Activated CD4-positive, alpha-beta memory T cell treated with anti-CD3 and anti-CD28 coated beads, Interleukin-2, amount 10 ng/mL, durations not matched to agents 7 days and 5 days (primary cell): ENCODE measurements at regions of chr12 and their contacts with region 1.

Region 1: DNA sequence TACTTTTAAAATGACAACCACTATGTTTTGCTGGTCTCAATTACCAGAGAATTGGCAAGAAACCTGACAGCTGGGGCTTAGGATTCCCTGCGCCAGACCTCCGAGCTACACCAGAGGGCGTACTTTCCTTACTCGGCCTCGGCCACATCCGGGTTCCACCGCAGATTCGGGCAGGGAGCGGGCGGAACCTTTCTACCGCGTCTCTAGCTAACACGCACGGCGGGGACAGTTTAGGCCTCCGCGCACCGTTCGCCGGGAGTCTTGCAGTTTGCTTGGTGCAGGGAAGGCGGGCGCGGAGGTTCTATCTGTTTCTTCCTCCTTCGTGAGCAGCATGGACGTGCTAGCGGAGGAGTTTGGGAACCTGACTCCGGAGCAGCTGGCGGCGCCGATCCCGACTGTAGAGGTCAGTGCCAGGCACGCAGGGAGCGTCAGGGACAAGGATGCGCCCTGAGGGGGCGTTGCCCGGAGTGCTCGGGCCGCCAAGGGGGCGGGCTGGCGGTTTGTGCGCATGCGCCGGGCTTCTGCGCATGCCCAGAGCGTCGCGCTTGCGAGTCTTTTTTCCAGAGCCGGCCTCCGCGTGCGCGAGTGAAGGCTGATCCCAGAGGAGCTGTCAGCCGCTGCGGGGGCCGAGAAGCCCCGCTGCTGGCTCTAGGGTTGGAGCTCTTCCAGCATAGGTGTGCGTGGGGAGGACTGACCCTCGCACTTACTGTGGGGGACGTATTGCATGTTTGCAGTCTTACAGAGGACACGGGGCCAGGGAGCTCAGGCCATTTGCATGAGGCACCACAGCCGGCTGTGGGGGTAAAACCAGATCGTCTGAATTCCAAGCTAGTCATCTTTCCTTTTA is at the start of gene POLR3B:
- DNase-seq: peak; percentile 97
- H3K4me3 Mint-ChIP-seq: peak within 1 kb of the TSS; percentile 87
- H3K27ac Mint-ChIP-seq: peak within 1 kb of the TSS; percentile 88
- H3K4me1 Mint-ChIP-seq: peaks cover 20% of the 10 kb centered on the region
- H3K27me3 Mint-ChIP-seq: no peaks in the 10 kb centered on the region
- total RNA-seq, gene POLR3B: 3.7 to 4.4 TPM

Region 2: DNA sequence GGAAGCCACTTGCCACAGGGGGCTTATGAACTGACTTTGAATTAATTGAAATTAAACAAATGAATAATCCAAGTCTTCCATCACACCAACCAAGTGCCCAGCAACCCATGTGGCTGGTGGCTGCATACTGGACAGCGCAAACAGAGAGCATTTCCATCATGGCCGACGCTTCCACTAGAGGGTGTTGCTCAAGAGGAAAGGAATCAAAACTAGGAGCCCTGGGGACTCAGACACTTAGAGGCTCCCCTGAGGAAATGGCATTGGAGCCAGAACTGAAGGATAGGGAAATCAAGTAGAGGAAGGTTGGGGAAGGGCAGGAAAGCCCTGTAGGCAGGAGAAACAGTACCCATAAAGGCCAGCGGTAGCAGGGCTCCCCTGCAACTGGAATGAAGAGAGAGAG is 168.4 kb before region 1 on chr12:
- CTCF ChIA-PET with region 1: no interaction called
- POLR2A ChIA-PET with region 1: no interaction called
- DNase-seq: no peak
- H3K4me3 Mint-ChIP-seq: no peak overlapping the region
- H3K27ac Mint-ChIP-seq: no peak overlapping the region
- H3K4me1 Mint-ChIP-seq: no peaks in the 10 kb centered on the region
- H3K27me3 Mint-ChIP-seq: peaks cover 15% of the 10 kb centered on the region

Region 3: DNA sequence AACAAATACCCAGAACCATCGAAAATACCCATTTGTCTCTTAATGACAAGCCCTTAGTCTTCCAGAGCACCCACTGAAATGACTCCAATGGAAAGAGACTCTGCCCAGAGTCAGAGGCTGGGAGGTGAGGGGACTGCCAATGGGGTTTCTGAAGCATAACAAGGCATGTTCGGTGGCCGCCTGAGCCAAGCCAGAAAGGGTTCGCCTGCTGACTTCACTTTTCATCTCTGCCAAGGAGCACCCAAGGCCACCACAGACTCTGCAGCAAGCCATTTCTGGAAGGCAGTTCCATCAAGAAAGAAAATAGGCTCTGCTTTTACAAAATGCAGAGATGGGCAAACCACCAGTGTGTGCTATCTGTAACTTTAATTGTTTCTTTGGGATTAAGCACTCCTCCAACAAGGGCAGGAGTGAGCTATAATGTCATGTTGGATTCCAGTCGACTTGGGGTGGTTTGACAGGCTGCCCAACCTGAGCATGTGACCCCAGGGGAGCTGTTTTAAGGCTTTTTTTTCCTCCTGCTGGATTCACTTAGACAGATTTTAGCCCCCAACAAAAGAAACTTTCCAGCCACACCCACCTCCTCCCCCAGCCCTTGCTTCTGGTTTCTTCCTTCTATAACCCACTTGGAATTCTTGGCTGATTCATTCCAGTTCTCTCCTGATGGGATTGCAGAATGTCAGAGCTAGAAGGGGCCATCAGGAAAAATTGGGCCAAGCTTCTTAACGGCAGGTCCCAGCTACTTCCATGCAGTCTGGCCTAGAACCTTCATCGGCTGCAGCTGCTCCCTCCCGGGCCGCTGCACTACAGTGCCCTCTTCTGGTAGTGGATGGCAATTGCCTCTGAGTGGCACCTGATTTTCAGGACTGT is 134.1 kb before region 1 on chr12:
- CTCF ChIA-PET with region 1: interaction called, 19 read pairs
- POLR2A ChIA-PET with region 1: interaction called, 3 read pairs
- DNase-seq: peak; percentile 76
- H3K4me3 Mint-ChIP-seq: no peak overlapping the region
- H3K27ac Mint-ChIP-seq: no peak overlapping the region
- H3K4me1 Mint-ChIP-seq: peaks cover 22% of the 10 kb centered on the region
- H3K27me3 Mint-ChIP-seq: peaks cover 3% of the 10 kb centered on the region

Region 4: DNA sequence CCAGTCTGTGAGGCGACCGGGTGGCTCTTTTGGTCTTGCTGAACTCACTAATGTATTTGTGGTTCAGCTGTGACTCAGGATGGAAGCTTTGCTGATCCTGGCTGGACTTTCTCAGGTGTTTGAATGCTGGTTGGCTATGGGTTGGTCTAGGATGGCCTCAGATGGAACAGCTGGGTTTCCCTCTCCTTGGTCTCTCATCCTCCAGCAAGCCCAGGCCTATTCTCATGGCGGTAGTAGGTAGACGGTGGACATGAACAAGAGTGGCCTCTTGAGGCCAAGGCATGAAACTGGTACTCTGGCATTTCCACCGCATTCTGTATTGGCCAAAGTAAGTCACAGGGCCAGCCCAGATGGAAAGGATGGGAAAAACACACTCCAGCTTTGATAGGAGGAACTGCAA is 12.0 kb before region 1 on chr12:
- CTCF ChIA-PET with region 1: interaction called, 10 read pairs
- POLR2A ChIA-PET with region 1: no interaction called
- DNase-seq: no peak
- H3K4me3 Mint-ChIP-seq: no peak overlapping the region
- H3K27ac Mint-ChIP-seq: no peak overlapping the region
- H3K4me1 Mint-ChIP-seq: no peaks in the 10 kb centered on the region
- H3K27me3 Mint-ChIP-seq: no peaks in the 10 kb centered on the region

Region 5: DNA sequence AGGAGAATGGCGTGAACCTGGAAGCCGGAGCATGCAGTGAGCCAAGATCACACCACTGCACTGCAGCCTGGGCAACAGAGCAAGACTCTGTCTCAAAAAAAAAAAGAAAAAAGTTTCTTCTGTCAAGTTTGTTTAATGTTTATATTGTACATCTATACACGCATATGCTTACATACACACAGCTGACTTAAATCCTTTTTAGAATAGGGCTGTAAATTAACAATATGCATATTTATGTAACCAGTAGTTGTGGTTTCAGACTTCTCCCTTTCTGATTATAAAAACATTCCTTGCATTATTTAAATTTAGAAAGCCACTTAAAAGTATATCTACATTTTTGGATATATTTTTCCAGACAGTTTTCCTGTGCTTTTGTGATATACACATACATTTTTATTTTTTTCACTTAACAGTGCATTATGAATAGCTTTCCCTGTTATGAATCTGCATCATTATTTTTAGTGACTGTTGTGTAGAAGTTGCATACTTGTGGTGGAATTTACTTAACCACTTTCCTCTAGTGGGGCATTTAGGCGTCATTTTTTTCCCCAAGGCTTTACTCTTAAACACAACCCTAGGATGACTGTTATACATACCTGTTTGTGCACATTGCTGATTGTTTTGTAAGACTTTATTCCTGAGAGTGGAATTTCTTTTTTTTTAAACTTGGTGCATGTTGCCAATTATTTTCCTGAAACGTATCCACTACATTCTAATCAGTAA is 29.2 kb after region 1 on chr12:
- CTCF ChIA-PET with region 1: interaction called, 16 read pairs
- POLR2A ChIA-PET with region 1: interaction called, 6 read pairs
- DNase-seq: no peak
- H3K4me3 Mint-ChIP-seq: no peak overlapping the region
- H3K27ac Mint-ChIP-seq: no peak overlapping the region
- H3K4me1 Mint-ChIP-seq: peaks cover 5% of the 10 kb centered on the region
- H3K27me3 Mint-ChIP-seq: no peaks in the 10 kb centered on the region

Region 6: DNA sequence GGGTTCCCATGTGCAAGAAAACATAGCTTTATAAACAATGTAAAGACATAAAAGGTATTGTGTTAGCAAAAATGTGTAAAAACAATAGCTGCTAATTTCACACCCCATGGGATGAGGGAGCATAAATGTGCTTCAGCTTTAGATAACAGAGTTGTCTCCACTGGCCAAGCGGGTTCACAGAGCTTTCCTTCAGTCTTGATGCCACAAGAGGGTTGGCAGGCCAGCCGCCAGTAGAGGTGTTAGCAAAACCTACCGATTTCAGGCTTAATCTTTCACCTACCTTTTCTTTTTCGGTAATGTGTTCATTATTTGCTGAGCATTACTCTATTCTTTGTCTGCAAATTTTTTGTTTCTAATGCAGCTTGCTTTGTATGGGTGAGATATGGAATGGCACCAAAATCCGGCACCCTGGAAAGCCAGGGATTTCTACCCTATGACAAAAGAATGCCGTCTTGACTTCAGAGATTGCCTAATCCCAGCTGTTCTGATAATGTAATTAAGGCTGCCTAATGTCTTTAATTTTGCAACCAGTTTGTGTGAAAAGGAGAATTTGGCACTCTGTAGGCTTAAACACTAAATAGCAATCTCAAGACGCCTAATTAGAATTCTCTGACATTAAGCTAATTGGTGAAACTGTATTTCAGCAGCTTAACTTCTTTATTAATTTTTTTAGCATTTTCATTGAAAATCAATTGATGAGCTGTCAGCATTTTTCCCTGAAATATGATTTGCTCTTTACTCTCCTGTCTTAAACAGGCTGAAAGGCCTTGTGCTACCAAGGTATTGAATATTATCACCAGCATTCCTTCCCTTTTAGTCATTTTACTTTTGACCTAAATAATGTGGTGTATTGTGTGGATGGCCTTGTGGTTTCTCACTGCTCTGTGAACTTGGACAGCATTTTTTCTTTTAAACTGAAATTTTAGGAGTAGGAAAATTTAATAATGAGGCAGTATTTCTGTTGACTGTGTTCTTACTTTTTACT is 60.4 kb after region 1 on chr12:
- CTCF ChIA-PET with region 1: no interaction called
- POLR2A ChIA-PET with region 1: no interaction called
- DNase-seq: no peak
- H3K4me3 Mint-ChIP-seq: no peak overlapping the region
- H3K27ac Mint-ChIP-seq: no peak overlapping the region
- H3K4me1 Mint-ChIP-seq: no peaks in the 10 kb centered on the region
- H3K27me3 Mint-ChIP-seq: no peaks in the 10 kb centered on the region

Region 7: DNA sequence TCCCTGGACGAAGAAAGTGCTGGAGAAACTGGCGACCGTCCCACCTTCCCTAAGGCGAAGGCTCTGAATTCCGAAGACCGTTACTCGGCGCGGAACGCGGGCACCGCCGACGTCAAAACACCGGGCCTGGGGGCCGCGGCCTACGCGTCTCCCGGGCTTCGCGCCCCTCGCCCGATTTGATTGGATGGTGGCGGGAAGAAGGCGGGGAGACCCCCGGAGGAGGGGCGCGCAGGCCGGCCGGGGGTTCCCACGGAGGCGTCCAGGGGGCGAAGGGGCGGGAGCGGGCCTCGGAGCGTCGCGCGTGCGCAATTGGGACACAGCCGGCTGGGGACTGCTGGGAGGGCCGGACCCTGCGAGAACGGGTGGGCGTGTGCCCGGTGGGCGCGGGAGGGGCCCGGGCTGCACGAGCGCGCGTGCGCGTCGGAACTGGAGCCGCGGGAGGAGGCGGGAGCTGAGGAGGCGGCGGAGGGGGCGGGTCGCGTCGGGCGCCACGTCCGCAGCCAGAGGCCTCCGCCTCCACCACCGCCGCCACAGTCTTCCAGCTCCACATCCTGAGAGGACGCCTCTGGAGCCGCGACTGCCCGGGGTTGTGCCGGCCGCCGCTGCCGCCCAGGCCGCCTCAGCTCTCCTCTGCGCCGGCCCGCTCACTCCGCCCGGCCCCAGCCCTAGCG is 597.7 kb after region 1 on chr12 and contains the start of gene TMEM263:
- CTCF ChIA-PET with region 1: interaction called, 12 read pairs
- POLR2A ChIA-PET with region 1: interaction called, 9 read pairs
- DNase-seq: peak; percentile 89
- H3K4me3 Mint-ChIP-seq: peak within 1 kb of the TSS; percentile 94
- H3K27ac Mint-ChIP-seq: peak within 1 kb of the TSS; percentile 81
- H3K4me1 Mint-ChIP-seq: peaks cover 20% of the 10 kb centered on the region
- H3K27me3 Mint-ChIP-seq: peaks cover 6% of the 10 kb centered on the region
- total RNA-seq, gene TMEM263: 26.0 to 27.0 TPM